ENCODE measurements at regions of chr4 and their contacts with region 1.

Region 1: GRCh38 chr4:75673027-75673958 is at the start of gene G3BP2:
- DNase-seq: peak; percentile 99
- ATAC-seq: peak; percentile 96 to 98 (median 98)
- H3K4me3 ChIP-seq: peak within 1 kb of the TSS; percentile 97
- H3K27ac ChIP-seq: peak within 1 kb of the TSS; percentile 99
- H3K4me1 ChIP-seq: peaks cover 42% of the 10 kb centered on the region
- H3K27me3 ChIP-seq: no peaks in the 10 kb centered on the region
- CTCF ChIP-seq: no peak
- total RNA-seq, gene G3BP2: 126 to 219 (median 156) TPM

Region 2: DNA sequence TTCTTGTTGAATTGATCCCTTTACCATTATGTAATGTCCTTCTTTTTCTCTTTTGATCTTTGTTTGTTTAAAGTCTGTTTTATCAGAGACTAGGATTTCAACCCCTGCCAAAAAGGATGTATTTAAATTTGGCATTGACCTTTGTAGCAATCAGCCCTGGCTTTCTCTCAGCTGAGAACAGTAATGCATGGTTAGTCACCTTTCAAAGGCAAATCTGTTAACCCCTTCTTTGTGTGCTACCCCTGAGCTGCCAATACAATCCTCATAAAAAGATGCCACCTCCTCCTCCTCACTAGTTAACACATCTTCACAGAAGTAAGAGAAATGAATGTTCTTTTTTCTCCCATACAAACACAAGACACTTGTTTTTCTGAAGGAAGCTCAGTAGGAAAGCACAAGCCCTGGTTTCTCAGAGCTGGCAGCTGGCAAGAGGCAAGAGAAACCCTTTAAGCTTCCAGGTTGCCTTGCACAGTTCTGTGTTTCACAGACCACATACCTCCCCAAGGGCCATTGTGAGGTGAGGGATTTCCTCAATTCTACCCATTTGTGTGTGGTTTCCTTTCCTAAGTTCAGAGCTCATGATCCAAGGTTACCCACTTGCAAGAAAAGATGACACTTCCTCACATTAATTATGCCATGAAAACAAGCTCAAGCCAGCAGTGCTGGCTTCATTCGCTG is 281.7 kb before region 1 on chr4:
- intact Hi-C with region 1: no loop called
- DNase-seq: no peak
- ATAC-seq: no peak
- H3K4me3 ChIP-seq: no peak overlapping the region
- H3K27ac ChIP-seq: no peak overlapping the region
- H3K4me1 ChIP-seq: no peaks in the 10 kb centered on the region
- H3K27me3 ChIP-seq: no peaks in the 10 kb centered on the region
- CTCF ChIP-seq: no peak

Region 3: DNA sequence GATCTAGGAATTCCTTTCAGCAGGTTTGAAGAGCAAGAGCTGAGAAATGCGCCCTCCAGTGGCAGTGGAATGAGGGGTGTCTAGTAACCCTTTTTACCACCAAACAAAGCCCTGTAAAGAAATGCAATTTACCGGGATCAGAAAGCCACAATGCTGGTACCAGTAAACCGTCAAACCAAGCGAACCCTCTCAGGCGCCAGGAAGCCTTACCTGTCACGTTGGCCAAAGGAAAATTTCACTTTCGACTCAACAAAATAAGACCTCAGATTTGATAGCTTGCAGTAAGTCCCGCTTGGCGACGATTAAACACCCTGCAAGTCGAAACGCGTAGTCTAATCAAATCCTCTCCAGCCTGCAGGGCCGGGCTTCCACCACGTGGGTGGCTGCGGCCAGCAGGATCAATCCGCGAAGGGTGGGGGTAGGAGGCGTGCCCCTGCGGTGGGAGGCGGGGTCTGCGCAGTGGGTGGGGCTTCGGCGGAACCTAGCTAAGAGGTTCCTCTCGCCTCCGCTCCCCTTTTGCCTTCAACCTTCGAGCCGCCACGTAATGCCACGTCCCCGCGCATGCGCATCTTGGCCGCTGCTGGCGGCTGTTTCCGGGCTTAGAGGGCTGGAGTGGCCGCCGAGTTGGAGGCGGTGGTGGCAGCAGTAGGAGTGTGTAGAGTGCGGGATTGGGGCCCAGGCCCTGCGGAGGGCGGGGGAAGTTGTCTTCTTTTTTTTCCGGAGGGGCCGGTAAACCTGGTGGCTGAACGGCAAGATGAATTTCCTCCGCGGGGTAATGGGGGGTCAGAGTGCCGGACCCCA is 51.0 kb after region 1 on chr4 and contains the start of gene USO1:
- intact Hi-C with region 1: loop called (anchors 1 to 2 kb)
- DNase-seq: peak; percentile 98 to 99
- ATAC-seq: peak; percentile 83 to 93 (median 90)
- H3K4me3 ChIP-seq: peak within 1 kb of the TSS; percentile 92
- H3K27ac ChIP-seq: peak within 1 kb of the TSS; percentile 99
- H3K4me1 ChIP-seq: peaks cover 39% of the 10 kb centered on the region
- H3K27me3 ChIP-seq: no peaks in the 10 kb centered on the region
- CTCF ChIP-seq: peak; percentile 70
- total RNA-seq, gene USO1: 175 to 210 (median 180) TPM

Measured in psoas muscle (tissue), 8 donors.